PC-9 (cell line): ENCODE measurements at regions of chr6 and their contacts with region 1.

Region 1: DNA sequence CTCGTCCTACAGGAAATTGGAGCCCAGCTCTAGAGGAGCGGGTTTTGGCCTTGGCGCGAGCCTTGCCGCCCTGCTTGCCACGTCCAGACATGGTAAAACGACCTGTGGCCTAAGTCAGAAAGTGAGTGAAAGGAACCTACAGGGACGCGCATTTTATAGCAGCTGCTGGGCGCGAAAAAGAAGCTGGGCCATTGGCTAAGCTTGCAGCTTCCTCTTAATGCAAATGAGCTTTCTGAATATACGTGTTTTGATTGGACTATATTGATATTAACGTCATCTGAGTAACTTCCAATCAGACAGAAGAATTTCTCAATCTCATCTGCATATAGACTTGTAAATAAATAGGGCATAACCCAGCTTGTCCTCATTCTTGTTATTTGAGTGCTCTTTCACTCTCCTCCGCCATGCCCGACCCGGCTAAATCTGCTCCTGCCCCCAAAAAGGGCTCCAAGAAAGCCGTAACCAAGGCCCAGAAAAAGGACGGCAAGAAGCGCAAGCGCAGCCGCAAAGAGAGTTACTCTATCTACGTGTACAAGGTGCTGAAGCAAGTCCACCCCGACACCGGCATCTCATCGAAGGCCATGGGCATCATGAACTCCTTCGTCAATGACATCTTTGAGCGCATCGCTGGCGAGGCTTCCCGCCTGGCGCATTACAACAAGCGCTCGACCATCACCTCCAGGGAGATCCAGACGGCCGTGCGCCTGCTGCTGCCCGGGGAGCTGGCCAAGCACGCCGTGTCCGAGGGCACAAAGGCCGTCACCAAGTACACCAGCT is 18.9 kb downstream of the OR2B2 start:
- DNase-seq: peak; percentile 94 to 99
- H3K4me3 ChIP-seq: peak overlapping the region; percentile 80
- H3K27ac ChIP-seq: peak overlapping the region; percentile 73
- H3K4me1 ChIP-seq: peaks cover 15% of the 10 kb centered on the region
- H3K27me3 ChIP-seq: no peaks in the 10 kb centered on the region
- CTCF ChIP-seq: no peak

Region 2: GRCh38 chr6:26596579-26597388 is 1296.5 kb before region 1 on chr6 and contains the start of gene ABT1:
- CTCF ChIA-PET with region 1: no interaction called
- POLR2A ChIA-PET with region 1: no interaction called
- intact Hi-C with region 1: loop called (anchors 5 kb)
- DNase-seq: peak; percentile 94 to 98
- H3K4me3 ChIP-seq: peak within 1 kb of the TSS; percentile 91
- H3K27ac ChIP-seq: peak within 1 kb of the TSS; percentile 48
- H3K4me1 ChIP-seq: 0 out of 2 replicates have a peak, but pooled peaks cover 8% of the 10 kb centered on the region
- H3K27me3 ChIP-seq: no peaks in the 10 kb centered on the region
- CTCF ChIP-seq: no peak
- total RNA-seq, gene ABT1: 16.8 and 19.5 TPM in 2 replicates

Region 3: GRCh38 chr6:27177485-27178406 is 715.5 kb before region 1 on chr6:
- CTCF ChIA-PET with region 1: interaction called, 3 read pairs
- POLR2A ChIA-PET with region 1: interaction called, 35 read pairs
- intact Hi-C with region 1: no loop called
- DNase-seq: peak; percentile 80 to 88
- H3K4me3 ChIP-seq: peak overlapping the region; percentile 97
- H3K27ac ChIP-seq: peak overlapping the region; percentile 67
- H3K4me1 ChIP-seq: no peaks in the 10 kb centered on the region; the same call in 1 of the 2 replicates
- H3K27me3 ChIP-seq: no peaks in the 10 kb centered on the region
- CTCF ChIP-seq: peak; percentile 67

Region 4: GRCh38 chr6:27472617-27473400 is 420.4 kb before region 1 on chr6 and contains the start of gene ZNF184:
- CTCF ChIA-PET with region 1: no interaction called
- POLR2A ChIA-PET with region 1: interaction called, 3 read pairs
- intact Hi-C with region 1: loop called (anchors 10 kb)
- DNase-seq: peak; percentile 94 to 98
- H3K4me3 ChIP-seq: peak within 1 kb of the TSS; percentile 91
- H3K27ac ChIP-seq: peak within 1 kb of the TSS; percentile 79
- H3K4me1 ChIP-seq: peaks cover 12% of the 10 kb centered on the region; the same call in 1 of the 2 replicates
- H3K27me3 ChIP-seq: no peaks in the 10 kb centered on the region
- CTCF ChIP-seq: peak; percentile 19; the same call in 1 of the 2 replicates
- total RNA-seq, gene ZNF184: 7.0 and 8.8 TPM in 2 replicates

Region 5: DNA sequence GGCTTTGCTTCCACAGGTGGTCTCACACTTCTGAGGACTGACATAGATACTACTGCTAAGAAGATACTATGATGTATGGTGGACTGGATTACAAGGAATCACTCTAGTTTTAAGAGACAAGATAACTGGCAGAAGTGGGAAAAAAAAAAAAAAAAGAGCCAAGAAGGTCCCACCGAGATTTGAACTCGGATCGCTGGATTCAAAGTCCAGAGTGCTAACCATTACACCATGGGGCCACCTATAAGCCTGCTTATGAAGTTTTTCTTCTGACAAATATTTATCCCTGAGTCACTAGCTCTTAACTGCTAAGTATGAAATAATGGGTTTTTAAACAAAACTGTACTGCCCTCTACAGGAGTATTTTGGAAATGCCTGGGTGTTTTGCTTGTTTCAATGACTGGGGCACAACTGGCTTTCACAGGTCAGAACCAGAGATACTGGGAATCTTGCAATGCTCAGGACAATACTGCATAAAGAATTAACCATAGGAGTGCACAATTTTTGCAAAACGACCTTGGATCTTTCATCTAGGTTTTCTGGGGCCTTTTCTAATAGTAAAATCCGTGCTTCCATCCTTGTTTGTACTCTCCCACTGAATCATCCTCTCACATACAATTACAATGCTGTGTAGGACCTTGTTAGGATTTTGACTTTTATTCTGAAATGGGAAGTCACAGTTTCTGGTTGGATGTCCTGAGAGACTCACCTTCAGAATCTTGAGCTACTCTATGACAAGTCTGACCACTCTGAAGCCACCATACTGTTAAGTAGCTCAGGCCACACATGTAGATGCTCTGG is 97.4 kb before region 1 on chr6:
- CTCF ChIA-PET with region 1: interaction called, 8 read pairs
- POLR2A ChIA-PET with region 1: interaction called, 12 read pairs
- intact Hi-C with region 1: no loop called
- DNase-seq: peak; percentile 70 to 87
- H3K4me3 ChIP-seq: no peak overlapping the region; the same call in 1 of the 2 replicates
- H3K27ac ChIP-seq: no peak overlapping the region
- H3K4me1 ChIP-seq: peaks cover 7% of the 10 kb centered on the region; the same call in 1 of the 2 replicates
- H3K27me3 ChIP-seq: no peaks in the 10 kb centered on the region
- CTCF ChIP-seq: peak; percentile 89

Region 6: GRCh38 chr6:27864906-27865849 is 28.1 kb before region 1 on chr6:
- CTCF ChIA-PET with region 1: interaction called, 3 read pairs
- POLR2A ChIA-PET with region 1: interaction called, 35 read pairs
- intact Hi-C with region 1: no loop called
- DNase-seq: peak; percentile 67 to 80
- H3K4me3 ChIP-seq: peak overlapping the region; percentile 55
- H3K27ac ChIP-seq: 0 out of 2 replicates have a peak overlapping the region, but pooled peaks have one; percentile 34
- H3K4me1 ChIP-seq: no peaks in the 10 kb centered on the region
- H3K27me3 ChIP-seq: no peaks in the 10 kb centered on the region
- CTCF ChIP-seq: no peak

Region 7: DNA sequence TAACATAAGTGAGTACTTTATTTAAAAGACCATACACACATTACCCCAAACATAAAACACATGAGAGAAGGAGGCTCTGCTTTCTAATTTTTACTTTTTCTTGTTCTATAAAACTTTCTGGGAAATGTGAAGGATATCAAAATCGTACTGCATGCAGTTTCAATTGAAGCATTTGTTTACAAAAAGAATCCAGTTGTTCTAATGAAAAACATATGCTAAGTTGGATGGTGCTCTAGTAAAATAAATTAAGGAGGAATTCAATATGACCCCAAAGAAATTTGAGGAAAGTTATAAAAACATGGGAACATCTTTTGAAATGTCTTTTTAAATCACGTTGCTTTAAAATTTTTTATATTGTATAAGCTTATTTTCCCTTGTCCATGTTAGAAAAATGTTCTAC is 101.4 kb after region 1 on chr6:
- CTCF ChIA-PET with region 1: no interaction called
- POLR2A ChIA-PET with region 1: no interaction called
- intact Hi-C with region 1: no loop called
- DNase-seq: no peak
- H3K4me3 ChIP-seq: no peak overlapping the region
- H3K27ac ChIP-seq: no peak overlapping the region
- H3K4me1 ChIP-seq: no peaks in the 10 kb centered on the region
- H3K27me3 ChIP-seq: no peaks in the 10 kb centered on the region
- CTCF ChIP-seq: no peak

Region 8: DNA sequence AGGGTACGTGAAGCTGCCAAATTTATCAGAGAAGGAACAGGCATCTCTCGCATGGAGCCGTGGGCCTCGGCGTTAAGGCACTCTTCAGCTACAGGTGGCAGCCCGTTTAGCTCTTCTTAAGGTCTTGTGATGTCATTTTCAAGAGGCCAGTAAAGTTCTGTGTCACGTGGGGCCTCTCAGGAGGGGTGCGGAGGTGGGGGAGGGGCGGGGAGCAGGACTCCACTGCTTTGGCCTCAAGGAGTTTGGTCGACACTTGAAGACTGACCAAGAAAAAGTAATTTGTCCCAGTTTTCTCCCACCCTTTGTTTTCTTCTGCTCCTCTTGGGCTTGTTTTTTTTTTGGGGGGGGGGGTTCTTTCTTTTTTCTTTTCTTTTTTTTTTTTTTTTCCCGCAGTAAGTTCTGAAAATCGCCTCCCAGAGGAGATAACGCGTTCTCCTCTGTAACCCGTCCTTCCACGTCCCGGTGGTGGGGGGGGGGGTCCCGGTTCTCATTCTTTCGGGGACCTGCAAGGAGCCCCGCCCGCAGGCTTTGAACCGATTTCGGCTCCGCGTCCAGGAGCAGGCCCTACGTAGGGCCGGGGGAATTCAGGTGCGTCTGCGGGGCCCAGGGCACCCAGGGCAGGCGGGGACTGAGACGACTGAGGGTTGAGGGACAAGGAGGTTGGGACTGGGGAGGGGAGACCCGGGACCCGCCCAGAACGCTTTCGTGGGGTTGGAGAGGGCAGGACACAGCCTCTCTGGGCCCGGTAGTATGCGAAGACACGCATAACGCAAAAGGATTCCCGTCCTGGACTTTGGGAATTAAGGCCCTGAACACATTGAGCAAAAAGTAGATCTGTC is 596.3 kb after region 1 on chr6:
- CTCF ChIA-PET with region 1: no interaction called
- POLR2A ChIA-PET with region 1: interaction called, 10 read pairs
- intact Hi-C with region 1: no loop called
- DNase-seq: peak; percentile 80 to 86
- H3K4me3 ChIP-seq: peak overlapping the region; percentile 63
- H3K27ac ChIP-seq: peak overlapping the region; percentile 64
- H3K4me1 ChIP-seq: peaks cover 24% of the 10 kb centered on the region
- H3K27me3 ChIP-seq: no peaks in the 10 kb centered on the region
- CTCF ChIP-seq: no peak